ENCODE measurements at regions of chr6 and their contacts with region 1.

Region 1: DNA sequence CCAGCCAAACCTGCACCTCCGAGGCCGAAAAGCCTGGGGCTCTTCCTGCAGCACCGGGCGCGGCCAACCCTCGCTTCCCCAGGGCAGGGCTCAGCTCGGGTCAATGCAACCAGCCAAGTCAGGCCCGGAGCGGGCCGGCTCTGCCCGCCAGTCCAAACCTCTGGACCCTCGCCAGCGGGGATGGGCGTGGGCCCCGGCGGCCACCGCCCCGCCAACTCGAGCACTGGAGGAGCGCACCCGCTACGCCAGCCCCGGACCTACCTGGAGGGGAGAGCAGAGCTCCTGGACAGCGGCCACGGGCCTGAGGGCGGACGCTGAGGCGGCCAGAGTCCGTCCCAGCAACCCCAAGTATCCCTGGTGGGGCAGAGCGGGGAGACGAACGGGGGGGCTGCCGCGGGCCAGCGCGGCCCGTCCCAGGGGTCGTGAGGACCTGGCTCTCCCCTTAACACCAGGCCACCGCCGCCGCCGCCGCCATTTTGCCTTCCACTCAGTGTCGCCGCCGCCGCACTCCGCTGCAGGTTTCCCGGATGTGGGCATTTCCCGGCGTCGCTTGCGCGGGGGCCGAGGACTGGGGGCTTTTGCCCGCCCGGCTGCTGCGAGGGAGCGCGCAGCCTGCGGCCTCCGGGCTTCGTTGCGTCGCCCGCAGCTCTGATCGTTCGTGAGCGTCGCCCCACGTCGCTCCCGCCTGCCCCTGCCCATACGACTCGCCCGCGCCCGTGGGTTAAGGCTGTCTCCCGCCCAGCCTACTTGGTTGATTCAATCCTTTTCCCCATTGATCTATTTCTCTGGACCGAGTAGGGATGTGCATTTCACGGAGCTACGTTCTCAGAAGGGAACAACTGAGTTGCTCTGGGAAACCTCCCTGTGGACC is at the start of gene LATS1:
- DNase-seq: peak; percentile 91 to 95 (median 95)
- ATAC-seq: peak; percentile 92 to 96 (median 94)
- H3K4me3 ChIP-seq: peak within 1 kb of the TSS; percentile 59 to 98 (median 81)
- H3K27ac ChIP-seq: peak within 1 kb of the TSS; percentile 94 to 100 (median 98)
- H3K4me1 ChIP-seq: peaks cover 3 to 39% (median 26%) of the 10 kb centered on the region in 12 donors
- H3K27me3 ChIP-seq: no peaks in the 10 kb centered on the region
- CTCF ChIP-seq: no peak
- POLR2A ChIP-seq: peak in 1 of 2 donors; percentile 73
- total RNA-seq, gene LATS1: 9.4 to 18.5 (median 10.9) TPM

Region 2: GRCh38 chr6:149515494-149515893 is 202.3 kb before region 1 on chr6:
- intact Hi-C with region 1: no loop called
- DNase-seq: no peak
- ATAC-seq: no peak
- H3K4me3 ChIP-seq: no peak overlapping the region
- H3K27ac ChIP-seq: no peak overlapping the region
- H3K4me1 ChIP-seq: peaks cover 0 to 7% (median 0%) of the 10 kb centered on the region in 12 donors
- H3K27me3 ChIP-seq: no peaks in the 10 kb centered on the region
- CTCF ChIP-seq: no peak
- POLR2A ChIP-seq: no peak

Region 3: DNA sequence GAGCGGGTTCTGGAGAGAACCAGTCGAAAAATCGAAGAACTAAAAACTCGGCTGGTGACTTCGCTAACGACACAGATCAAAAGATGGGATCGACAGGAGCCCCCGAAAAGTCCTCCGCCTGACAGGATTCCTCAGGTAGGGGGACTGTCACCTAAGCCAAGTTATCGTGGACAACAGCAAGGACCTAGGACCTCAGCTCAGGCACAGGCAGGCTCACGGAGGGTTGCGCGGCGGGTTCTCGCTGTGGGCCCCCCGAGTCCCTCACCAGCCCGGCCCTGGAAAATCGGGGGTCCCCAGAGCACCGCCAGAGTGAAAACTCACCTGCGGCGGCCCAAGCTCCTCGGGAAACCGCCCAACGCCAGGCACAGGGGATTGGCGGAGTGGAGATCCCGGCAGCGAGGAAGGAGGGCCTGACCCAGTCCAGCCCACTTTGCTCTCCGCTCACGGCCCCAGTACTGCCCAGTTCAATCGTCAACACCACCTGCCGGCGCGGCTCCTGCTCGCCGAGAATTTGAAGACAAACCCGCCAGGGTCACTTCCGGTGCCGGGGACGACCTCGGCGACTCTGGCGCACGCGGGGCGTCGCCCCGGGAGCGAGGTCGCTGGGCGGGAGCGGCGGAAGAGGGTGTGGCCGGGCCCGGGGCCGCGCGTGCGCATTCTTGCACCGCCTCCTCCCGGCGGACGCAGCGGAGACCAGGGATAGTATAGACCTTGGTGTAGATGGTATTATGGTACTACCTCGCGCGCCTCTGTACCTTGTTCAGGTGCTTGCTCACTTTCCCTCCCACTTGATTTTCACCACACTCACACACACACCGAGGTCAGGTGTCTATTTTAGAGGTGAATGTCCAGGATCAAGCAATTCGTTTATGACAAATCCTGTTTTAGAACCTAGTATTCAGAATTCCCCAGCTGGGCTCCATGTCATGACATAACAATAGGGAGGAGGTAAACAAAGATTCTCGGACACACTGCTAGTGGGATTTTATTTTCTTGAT is 69.4 kb before region 1 on chr6 and contains the start of gene KATNA1:
- intact Hi-C with region 1: loop called in 1 of 10 experiments (anchors 5 kb)
- DNase-seq: peak; percentile 85 to 95 (median 91)
- ATAC-seq: peak; percentile 90 to 98 (median 98)
- H3K4me3 ChIP-seq: peak within 1 kb of the TSS; percentile 71 to 97 (median 83)
- H3K27ac ChIP-seq: peak within 1 kb of the TSS; percentile 20 to 90 (median 84)
- H3K4me1 ChIP-seq: peaks cover 0 to 34% (median 16%) of the 10 kb centered on the region in 12 donors
- H3K27me3 ChIP-seq: no peaks in the 10 kb centered on the region
- CTCF ChIP-seq: peak in 4 of 12 donors; percentile 0 to 15 (median 8)
- POLR2A ChIP-seq: peak in 1 of 2 donors; percentile 82
- total RNA-seq, gene KATNA1: 9.6 to 19.3 (median 12.6) TPM

Region 4: DNA sequence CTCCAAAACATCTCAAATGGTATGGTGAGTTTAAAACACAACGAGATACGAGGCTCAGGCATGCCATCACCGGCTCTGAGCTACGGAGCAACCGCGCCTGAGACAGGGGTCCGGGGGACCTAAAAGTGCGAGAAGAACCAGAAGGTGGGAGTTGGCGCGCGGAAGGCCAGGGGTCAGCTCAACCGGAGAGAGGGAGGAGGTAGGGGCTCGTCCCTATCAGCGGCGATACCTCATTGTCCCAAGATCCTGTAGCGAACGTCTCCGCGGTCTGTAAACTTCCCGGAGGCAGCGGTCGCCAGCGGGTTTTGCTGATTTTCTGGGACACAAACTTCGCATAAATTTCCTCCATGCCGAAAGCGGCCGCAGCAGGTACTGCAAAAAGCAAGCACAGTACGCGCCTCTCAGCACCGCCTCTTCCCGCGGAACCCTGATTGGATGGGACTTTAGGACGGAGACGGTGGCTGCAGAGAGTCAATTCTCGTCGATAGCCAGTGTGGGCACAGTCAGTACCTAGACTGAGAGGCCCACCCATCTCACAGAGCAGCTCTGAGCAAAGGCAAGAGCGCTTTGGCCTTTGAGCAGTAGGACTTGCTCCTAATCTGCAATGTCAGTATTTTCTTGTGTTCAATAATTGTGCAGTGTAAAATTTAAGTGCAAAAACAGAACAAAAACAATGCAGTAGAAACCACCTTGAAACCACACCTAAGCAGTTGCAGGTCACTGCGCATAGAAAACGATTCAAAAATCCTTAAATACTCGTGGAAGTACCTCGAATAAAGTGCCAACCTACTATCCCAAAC is 28.5 kb after region 1 on chr6 and contains the start of gene NUP43:
- intact Hi-C with region 1: loop called in 1 of 10 experiments (anchors 1 kb)
- DNase-seq: peak; percentile 94 to 97 (median 95)
- ATAC-seq: peak; percentile 74 to 85 (median 82)
- H3K4me3 ChIP-seq: peak within 1 kb of the TSS; percentile 49 to 91 (median 74)
- H3K27ac ChIP-seq: peak within 1 kb of the TSS; percentile 13 to 83 (median 72)
- H3K4me1 ChIP-seq: peaks cover 0 to 32% (median 25%) of the 10 kb centered on the region in 12 donors
- H3K27me3 ChIP-seq: no peaks in the 10 kb centered on the region
- CTCF ChIP-seq: peak in 11 of 12 donors; percentile 39 to 72 (median 50)
- POLR2A ChIP-seq: peak in 1 of 2 donors; percentile 36
- total RNA-seq, gene NUP43: 14.5 to 32.9 (median 27.2) TPM

Measured in heart left ventricle (tissue), 16 donors.